H1 (cell line): ENCODE measurements at regions of chr17 and their contacts with region 1.

Region 1: DNA sequence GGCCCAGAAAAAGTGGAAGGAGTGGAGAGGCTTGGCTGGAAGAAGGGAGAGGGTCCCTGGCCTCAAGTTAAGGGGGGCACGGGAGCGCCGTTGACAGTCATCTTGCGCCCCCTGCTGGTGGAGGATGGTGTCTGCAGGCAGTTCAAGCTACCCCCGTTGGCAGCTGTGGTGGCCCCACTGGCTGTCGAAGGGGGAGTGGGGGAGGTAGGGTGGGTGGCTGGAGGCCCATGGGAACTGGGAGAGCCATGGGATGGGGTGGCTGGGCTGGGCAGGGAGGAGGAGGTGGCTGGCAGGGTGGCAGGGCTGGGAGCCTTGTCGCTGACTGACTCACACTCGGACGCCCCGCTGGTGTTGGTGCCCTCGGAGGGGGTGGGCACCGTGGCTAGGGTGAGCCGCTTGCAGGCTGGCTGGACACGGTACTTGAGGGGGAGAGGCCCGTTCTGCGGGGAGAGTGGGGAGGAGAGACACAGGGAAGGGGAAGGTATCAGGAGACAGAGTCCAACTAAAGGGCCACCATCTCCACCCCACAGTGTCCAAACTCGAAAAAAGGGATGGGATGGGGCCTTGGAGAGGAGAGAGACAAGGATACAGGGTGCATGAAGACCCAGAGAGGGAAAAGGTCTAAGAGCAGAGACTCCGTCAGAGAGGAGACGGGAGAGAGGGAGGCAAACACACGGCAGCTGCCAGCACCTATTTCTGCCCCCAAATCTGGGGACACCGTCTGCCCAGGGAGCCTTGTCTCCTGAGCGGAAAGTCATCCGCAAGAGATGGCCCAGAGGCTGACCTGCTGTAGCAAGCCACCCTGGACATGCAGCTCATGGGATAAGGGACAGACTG is 5.2 kb downstream of the CISD3 start:
- DNase-seq: peak in 1 of 2 experiments; percentile 93
- H3K4me3 ChIP-seq: no peak overlapping the region
- H3K27ac ChIP-seq: no peak overlapping the region
- H3K4me1 ChIP-seq: peaks cover 0 to 12% (median 6%) of the 10 kb centered on the region in 4 experiments; a peak in 5 of 7 replicates
- H3K27me3 ChIP-seq: no peaks in the 10 kb centered on the region
- CTCF ChIP-seq: peak; percentile 85 to 99 (median 93)
- EP300 ChIP-seq: no peak
- POLR2A ChIP-seq: no peak
- RAD21 ChIP-seq: peak; percentile 87 to 89

Region 2: DNA sequence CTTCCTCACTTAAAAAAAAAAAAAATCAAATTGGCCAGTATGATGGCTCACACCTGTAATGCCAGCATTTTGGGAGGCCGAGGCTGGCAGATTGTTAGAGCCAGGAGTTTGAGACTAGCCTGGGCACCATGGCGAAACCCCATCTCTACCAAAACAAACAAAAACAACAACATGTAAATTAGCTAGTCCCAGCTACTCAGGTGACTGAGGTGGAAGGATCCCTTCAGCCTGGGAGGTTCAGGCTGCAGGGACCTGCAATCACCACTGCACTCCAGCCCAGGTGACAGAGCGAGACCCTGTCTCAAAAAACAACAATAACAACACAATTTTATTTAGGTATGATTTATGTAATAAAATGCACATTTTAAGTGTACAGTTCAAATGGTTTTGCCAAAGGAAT is 54.3 kb before region 1 on chr17:
- CTCF ChIA-PET with region 1: interaction called, 44 read pairs
- POLR2A ChIA-PET with region 1: interaction called, 7 read pairs
- DNase-seq: no peak
- H3K4me3 ChIP-seq: no peak overlapping the region
- H3K27ac ChIP-seq: no peak overlapping the region
- H3K4me1 ChIP-seq: peaks cover 0 to 3% (median 0%) of the 10 kb centered on the region in 4 experiments; a peak in 1 of 7 replicates
- H3K27me3 ChIP-seq: peaks cover 4 to 17% (median 7%) of the 10 kb centered on the region in 4 experiments
- CTCF ChIP-seq: no peak
- EP300 ChIP-seq: no peak
- POLR2A ChIP-seq: no peak
- RAD21 ChIP-seq: no peak

Region 3: DNA sequence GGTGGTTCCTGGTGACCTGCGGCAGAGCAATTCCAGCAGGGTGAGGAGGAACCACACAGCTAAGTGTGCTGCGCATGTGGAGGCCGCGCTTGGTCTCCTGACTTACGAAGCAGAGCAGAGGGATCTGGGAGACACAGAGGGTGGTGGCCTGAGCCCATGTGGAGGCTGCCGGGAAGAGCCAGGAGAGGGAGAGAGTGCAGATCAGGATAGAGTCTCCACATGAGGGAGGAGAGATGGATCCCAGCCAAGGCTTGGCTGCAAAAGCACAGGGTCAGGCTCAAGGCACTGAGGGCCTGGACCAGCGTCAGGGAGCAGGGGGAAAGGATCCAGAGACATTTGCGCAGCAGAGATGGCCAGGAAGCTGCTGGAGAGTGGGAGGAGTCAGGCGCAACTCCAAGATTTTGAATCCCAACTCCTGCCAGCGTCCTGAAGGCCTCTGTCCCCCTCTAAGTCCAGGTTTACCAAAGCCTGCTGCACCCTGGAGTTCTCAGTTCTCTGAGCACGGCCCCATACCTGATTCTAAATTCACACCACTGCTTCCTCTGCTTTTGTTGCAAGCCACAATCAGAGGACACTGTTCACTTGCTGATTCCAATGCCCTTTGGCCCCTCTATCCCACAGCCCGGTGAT is 41.6 kb before region 1 on chr17:
- CTCF ChIA-PET with region 1: interaction called, 17 read pairs
- POLR2A ChIA-PET with region 1: no interaction called
- DNase-seq: no peak
- H3K4me3 ChIP-seq: no peak overlapping the region
- H3K27ac ChIP-seq: no peak overlapping the region
- H3K4me1 ChIP-seq: no peaks in the 10 kb centered on the region
- H3K27me3 ChIP-seq: peaks cover 0 to 22% (median 20%) of the 10 kb centered on the region in 4 experiments; a peak in 6 of 7 replicates
- CTCF ChIP-seq: no peak
- EP300 ChIP-seq: no peak
- POLR2A ChIP-seq: no peak
- RAD21 ChIP-seq: no peak

Region 4: GRCh38 chr17:38711792-38712571 is 23.4 kb before region 1 on chr17:
- CTCF ChIA-PET with region 1: interaction called, 49 read pairs
- POLR2A ChIA-PET with region 1: interaction called, 13 read pairs
- DNase-seq: no peak
- H3K4me3 ChIP-seq: no peak overlapping the region
- H3K27ac ChIP-seq: no peak overlapping the region
- H3K4me1 ChIP-seq: peaks cover 9 to 36% (median 25%) of the 10 kb centered on the region in 4 experiments
- H3K27me3 ChIP-seq: peaks cover 1 to 26% (median 15%) of the 10 kb centered on the region in 4 experiments
- CTCF ChIP-seq: no peak
- EP300 ChIP-seq: no peak
- POLR2A ChIP-seq: no peak
- RAD21 ChIP-seq: no peak

Region 5: DNA sequence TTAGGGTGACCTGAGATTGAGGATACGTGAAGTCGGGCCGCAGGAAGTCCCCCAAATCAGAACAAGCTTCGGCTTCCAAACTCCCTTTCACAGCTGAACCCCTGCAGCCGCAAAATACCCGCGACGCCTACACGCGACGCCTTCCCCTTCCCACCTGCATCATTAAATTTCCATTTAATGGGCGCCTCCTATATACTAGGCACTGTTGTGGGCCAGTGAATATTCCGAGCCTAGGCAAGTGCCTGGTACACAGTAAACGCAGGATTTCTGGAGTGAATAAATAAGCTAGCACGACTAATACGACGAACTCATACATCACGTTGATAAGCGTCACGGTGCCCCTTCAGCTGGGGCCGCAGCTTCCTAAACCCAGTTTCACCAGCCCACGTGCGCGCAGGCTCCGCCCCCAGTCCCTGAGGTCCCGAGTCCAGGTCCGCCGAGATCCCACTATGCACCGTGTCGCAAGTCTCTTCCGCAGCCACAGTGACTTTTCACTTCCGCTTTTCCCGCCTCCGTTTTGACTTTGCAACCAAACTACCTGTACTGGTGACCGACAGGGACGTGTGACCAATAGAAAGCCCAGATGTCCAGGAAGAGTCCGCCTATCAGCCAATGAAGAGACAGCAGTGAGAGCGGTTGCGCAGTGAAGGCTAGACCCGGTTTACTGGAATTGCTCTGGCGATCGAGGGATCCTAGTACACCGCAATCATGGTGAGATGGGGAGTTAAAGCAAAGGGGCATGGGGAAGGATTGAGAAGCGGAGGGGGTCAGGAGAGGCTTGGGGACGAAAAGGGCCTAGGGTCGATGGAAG is 16.9 kb after region 1 on chr17 and contains the start of gene PSMB3:
- CTCF ChIA-PET with region 1: interaction called, 10 read pairs
- POLR2A ChIA-PET with region 1: interaction called, 40 read pairs
- DNase-seq: peak; percentile 88 to 96
- H3K4me3 ChIP-seq: peak within 1 kb of the TSS; percentile 86 to 99 (median 90)
- H3K27ac ChIP-seq: peak within 1 kb of the TSS; percentile 67; the same call in 1 of the 2 replicates
- H3K4me1 ChIP-seq: peaks cover 0 to 5% (median 3%) of the 10 kb centered on the region in 4 experiments; a peak in 4 of 7 replicates
- H3K27me3 ChIP-seq: peaks cover 0 to 11% (median 5%) of the 10 kb centered on the region in 4 experiments; a peak in 5 of 7 replicates
- CTCF ChIP-seq: 0 out of 4 replicates have a peak, but pooled peaks of 1 of the 3 experiments have one; percentile 3
- EP300 ChIP-seq: no peak
- POLR2A ChIP-seq: peak in 1 of 2 experiments; percentile 75; a peak in 1 of 3 replicates
- RAD21 ChIP-seq: no peak
- total RNA-seq, gene PSMB3: 291 and 301 TPM in 2 replicates